Right ventricle myocardium superior (tissue), 1 donor: ENCODE measurements at regions of chr2 and their contacts with region 1.

Region 1: DNA sequence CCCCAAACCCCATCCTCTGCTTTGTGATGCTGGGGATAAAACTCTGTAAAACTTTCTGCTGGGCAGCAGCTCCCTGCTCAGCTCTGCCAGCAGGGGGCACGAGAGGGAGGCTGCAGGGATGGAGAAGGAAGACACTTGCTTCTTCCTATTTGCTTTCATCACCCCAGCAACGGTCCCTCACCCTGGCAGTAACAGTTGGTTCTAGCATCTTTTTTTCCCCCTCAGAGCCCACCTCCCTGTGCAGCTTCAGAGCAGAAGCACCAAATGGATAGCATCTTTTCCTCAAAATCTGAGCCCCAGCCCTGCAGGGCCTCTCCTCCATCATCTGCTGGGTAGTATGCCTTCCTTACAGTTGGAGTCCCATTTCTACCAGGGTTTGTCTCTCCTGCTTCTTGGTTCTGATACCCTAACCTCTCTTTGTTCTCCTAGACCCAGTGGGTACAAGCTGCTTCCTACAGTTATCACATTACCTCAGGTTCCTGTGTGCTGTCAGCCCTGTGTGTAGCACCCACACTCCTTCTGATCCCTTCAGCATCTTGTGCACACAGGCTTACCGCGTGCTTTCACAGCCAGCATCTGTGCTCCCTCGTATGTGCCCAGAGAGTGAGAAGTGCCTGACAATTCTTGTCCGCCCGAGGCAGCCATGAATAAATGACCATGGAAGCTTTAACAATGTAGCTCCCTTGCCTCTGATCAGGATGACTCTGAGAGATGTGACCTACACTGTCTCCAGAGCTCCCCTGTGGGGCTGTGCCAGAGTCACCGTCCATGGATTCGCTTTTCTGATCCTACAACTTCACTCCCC is 14.5 kb downstream of the CKAP2L start:
- DNase-seq: peak; percentile 78
- ATAC-seq: peak; percentile 71

Region 2: DNA sequence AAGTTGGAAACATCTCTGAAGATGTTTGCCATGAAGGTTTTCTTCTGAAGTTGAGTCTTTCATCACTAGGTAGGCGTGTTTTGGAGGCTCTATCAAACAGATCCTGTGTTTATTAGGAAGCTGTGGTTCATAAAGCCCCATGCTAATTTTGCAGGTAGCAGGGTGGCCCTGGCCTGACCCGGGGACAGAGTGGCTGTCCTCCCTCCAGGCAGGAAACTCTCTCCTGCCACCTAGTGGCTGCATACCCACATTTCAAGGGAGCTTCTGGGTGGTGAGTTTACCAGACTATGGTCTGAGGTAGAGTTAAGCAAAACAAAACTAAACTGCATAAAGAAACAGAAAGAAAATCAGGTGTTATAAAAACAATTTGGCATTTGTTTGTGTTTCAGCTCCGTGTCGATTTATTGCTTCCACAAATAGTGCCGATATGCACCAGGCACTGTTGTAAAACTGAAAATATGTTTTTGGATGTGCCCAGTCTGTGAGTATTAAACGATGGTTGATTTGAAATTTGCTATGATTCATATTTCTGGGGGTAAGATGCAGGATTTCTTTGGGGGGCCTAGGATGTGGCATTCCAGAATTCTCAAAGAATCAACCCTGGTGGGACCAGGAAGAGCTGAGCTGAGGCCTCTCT is 135.0 kb after region 1 on chr2:
- intact Hi-C with region 1: loop called (anchors 5 kb)
- DNase-seq: no peak
- ATAC-seq: peak; percentile 75

Region 3: DNA sequence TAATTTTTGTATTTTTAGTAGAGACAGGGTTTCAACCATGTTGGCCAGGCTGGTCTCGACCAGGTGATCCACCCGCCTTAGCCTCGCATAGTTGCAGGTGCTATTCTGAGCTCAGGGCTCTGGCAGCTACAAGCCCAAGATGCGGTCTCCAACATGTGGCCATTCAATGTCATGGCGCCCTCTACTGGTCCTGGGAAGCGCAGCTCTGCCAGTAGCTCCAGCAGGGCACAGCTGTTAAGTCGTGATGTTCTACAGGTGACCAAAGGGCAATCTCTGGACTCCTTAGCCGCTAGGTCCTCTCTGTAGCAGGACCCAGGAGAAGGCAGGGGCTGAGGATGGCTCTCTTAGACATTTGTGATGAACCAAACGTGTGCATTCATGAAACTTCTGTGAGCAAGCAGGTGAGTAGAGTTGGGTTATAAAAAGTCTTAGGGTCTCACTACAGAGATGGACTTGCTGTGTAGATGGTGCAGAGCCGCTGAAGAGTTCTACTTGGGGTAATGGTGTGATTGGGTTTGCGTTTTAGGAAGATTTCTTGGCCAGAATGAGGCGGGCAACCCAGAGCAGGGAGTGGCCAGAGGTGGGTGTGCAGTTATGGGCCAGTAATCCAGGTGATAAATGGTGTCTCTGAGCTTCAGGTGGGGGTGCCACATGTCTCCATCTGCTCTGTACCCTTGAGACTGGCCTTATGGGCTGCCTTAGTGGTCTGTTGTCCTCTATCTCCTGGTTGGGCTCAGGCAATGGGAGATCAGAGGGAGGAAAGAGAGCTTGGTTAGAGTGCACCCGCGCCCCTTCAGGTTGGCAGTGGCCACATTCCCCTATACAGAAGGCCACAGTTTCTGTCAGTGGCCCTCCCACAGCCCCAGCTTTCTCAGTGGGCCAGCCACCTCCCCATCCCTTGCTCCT is 192.0 kb after region 1 on chr2:
- intact Hi-C with region 1: loop called (anchors 10 kb)
- DNase-seq: peak; percentile 71
- ATAC-seq: peak; percentile 75